ENCODE measurements at regions of chr5 and their contacts with region 1.

Region 1: GRCh38 chr5:159915904-159916840 is at the start of gene ADRA1B:
- DNase-seq: peak; percentile 45 to 87
- H3K4me3 ChIP-seq: peak within 1 kb of the TSS; percentile 64
- H3K27ac ChIP-seq: peak within 1 kb of the TSS; percentile 100
- H3K4me1 ChIP-seq: peaks cover 94% of the 10 kb centered on the region
- H3K27me3 ChIP-seq: no peaks in the 10 kb centered on the region
- CTCF ChIP-seq: peak; percentile 51
- total RNA-seq, gene ADRA1B: 4.6 and 6.0 TPM in 2 replicates

Region 2: DNA sequence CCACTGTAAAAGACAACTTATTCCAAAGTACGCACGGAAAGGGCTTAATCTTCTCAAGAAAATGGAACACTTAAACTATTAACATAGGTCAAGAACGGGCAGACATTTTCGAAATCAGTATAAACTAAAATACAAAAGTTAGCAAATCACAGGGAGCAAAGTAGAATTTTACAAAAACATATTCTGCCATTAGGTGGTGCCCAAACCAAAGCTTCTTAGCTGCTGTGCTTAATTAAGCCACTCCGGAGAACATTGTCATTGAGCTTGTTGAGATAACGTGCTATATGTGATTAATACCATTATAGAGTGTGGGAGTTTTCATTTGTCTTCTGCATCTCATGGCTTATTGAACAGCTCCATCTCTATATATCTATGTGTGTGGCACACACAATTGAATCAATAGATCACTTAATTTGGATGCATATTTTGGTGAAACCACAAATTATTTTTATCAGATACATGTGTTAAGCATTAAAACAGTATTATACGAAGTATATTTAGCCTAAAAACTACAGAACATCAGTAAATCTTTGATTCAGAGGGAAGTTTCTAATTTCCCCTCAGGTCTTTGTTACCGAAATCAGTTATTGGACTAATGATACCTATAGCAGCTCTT is 629.6 kb before region 1 on chr5:
- CTCF ChIA-PET with region 1: interaction called, 3 read pairs
- POLR2A ChIA-PET with region 1: no interaction called
- intact Hi-C with region 1: loop called (anchors 1 kb)
- DNase-seq: no peak
- H3K4me3 ChIP-seq: no peak overlapping the region
- H3K27ac ChIP-seq: no peak overlapping the region
- H3K4me1 ChIP-seq: 0 out of 2 replicates have a peak, but pooled peaks cover 5% of the 10 kb centered on the region
- H3K27me3 ChIP-seq: no peaks in the 10 kb centered on the region
- CTCF ChIP-seq: peak; percentile 68

Region 3: DNA sequence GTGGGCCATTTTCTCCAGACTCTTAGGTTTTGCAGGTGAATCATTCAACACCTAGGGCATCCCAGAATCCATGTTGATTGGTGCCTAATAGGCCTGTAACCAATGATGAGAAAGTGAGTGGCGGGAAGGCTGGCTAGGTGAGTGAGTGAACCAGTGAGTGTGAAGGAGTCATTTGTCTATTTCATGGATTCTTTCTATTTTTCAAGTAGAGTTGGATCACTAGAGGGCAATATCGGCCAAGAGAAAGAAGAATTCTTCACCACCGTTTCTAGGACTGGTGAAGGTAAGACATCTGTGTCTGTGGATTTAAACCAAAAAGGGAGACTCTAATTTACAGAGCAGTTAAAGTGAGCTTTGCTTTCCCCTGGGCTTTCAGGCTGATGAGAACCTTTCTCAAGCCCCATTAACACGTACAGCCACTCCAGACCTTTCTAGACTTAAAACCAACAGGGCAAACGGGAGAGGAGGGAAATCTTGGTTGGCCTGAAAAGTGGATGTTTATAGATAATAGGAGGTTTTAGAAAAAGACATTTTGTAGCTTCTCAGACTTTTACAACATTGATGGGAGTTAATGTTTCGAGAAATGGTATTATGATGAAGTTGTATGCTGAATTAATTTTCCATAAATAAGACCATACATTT is 471.6 kb before region 1 on chr5:
- CTCF ChIA-PET with region 1: interaction called, 7 read pairs
- POLR2A ChIA-PET with region 1: no interaction called
- intact Hi-C with region 1: loop called (anchors 1 kb)
- DNase-seq: peak; percentile 38 to 65
- H3K4me3 ChIP-seq: no peak overlapping the region
- H3K27ac ChIP-seq: no peak overlapping the region
- H3K4me1 ChIP-seq: peaks cover 9% of the 10 kb centered on the region
- H3K27me3 ChIP-seq: no peaks in the 10 kb centered on the region
- CTCF ChIP-seq: peak; percentile 74

Region 4: GRCh38 chr5:159515909-159516415 is 400.2 kb before region 1 on chr5:
- CTCF ChIA-PET with region 1: interaction called, 26 read pairs
- POLR2A ChIA-PET with region 1: no interaction called
- intact Hi-C with region 1: loop called (anchors 1 kb)
- DNase-seq: peak; percentile 58 to 76
- H3K4me3 ChIP-seq: no peak overlapping the region
- H3K27ac ChIP-seq: no peak overlapping the region
- H3K4me1 ChIP-seq: peaks cover 45% of the 10 kb centered on the region
- H3K27me3 ChIP-seq: no peaks in the 10 kb centered on the region
- CTCF ChIP-seq: peak; percentile 72

Region 5: DNA sequence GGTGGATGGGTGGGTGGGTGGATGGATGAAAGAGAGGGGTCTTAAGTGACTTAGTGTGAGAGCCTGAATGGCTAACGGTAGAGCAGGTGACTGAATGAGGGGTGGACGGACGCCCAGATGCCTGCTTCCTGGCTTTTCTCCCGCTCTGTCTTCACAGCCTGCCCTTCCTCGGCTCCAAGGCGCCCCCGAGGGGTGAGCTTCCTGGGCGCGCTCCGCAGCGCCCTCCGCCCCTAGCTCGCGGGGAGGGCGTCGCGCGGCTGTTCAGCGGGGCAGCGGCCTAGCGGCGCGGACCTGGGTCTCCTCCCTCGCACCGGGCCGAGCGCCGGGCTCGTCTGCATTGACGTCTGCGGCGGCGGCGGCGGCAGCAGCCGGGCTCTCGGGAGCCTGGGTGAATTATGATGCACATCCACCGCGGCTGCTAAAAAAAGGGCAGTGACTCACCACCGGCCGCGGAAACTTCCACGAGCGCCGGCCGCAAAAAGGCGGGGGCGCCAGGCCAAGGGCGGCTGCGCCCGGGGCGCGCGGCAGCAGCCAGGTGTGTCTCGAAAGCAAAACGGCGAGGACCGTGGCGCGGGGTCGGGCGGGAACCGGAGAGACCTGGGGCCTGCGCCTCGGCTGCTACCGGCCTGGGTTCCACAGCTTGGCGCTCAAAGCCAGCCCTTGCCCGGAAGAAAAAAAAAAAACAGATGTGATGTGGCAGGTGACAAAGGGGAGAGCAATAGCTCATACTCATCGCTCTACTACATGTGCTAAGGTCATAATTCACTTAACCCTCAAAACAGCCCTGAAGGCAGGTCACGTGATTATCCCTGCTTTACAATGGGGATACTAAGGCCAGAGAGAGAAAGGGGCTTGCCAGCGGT is 142.9 kb before region 1 on chr5:
- CTCF ChIA-PET with region 1: no interaction called
- POLR2A ChIA-PET with region 1: no interaction called
- intact Hi-C with region 1: loop called (anchors 1 kb)
- DNase-seq: peak; percentile 71 to 83
- H3K4me3 ChIP-seq: peak overlapping the region; percentile 61
- H3K27ac ChIP-seq: peak overlapping the region; percentile 66
- H3K4me1 ChIP-seq: peaks cover 33% of the 10 kb centered on the region
- H3K27me3 ChIP-seq: no peaks in the 10 kb centered on the region
- CTCF ChIP-seq: peak; percentile 38; the same call in 1 of the 2 replicates

Region 6: GRCh38 chr5:159814810-159815585 is 101.2 kb before region 1 on chr5:
- CTCF ChIA-PET with region 1: no interaction called
- POLR2A ChIA-PET with region 1: no interaction called
- intact Hi-C with region 1: no loop called
- DNase-seq: no peak
- H3K4me3 ChIP-seq: no peak overlapping the region
- H3K27ac ChIP-seq: no peak overlapping the region
- H3K4me1 ChIP-seq: peaks cover 50% of the 10 kb centered on the region
- H3K27me3 ChIP-seq: no peaks in the 10 kb centered on the region
- CTCF ChIP-seq: no peak

Region 7: GRCh38 chr5:159861086-159861485 is 55.1 kb before region 1 on chr5:
- CTCF ChIA-PET with region 1: no interaction called
- POLR2A ChIA-PET with region 1: no interaction called
- intact Hi-C with region 1: no loop called
- DNase-seq: no peak
- H3K4me3 ChIP-seq: no peak overlapping the region
- H3K27ac ChIP-seq: no peak overlapping the region
- H3K4me1 ChIP-seq: 0 out of 2 replicates have a peak, but pooled peaks cover 8% of the 10 kb centered on the region
- H3K27me3 ChIP-seq: no peaks in the 10 kb centered on the region
- CTCF ChIP-seq: no peak

Region 8: DNA sequence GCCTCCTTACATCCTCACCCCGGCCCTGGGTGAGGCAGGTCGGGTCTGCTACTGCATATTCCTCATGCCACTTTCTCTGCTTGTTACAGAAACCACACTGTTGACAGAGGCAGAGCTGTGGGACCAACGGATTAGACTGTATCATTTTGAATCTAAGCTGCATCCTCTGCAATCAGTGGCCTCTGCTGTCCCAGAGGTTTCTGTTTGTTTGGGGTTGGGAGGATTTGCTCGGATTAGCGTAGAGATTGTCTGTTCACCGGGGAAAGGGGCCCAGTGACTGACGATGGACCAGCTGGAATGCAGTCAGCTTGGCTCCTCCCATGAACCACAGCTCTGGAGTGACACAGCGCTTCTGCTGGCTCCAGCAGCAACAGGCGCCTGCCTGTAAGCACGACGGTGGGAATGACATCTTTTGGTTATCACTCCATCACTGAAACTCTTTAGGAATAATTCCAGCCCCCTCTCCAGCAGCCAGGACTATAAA is 37.1 kb before region 1 on chr5:
- CTCF ChIA-PET with region 1: no interaction called
- POLR2A ChIA-PET with region 1: no interaction called
- intact Hi-C with region 1: loop called (anchors 2 kb)
- DNase-seq: peak; percentile 59 to 74
- H3K4me3 ChIP-seq: no peak overlapping the region
- H3K27ac ChIP-seq: peak overlapping the region; percentile 22; the same call in 1 of the 2 replicates
- H3K4me1 ChIP-seq: peaks cover 29% of the 10 kb centered on the region
- H3K27me3 ChIP-seq: no peaks in the 10 kb centered on the region
- CTCF ChIP-seq: no peak

Region 9: DNA sequence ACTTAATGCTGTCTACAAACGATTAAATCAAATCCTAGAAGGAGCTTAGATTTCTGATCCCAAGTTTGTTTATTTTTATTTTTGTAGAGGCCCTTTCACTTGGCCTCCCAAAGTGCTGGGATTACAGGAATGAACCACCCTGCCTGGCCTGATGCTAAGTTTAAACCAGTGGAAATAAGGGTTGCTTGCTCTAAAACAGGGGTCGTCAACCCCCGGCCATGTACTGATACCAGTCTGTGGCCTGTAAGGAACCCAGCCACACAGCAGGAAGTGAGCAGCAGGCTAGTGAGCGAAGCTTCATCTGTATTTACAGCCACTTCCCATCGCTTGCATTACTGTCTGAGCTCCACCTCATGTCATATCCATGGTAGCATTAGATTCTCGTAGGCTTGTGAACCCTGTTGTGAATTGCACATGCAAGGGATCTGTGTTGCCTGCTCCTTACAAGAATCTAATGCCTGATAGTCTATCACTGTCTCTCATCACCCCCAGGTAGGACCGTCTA is 104.1 kb after region 1 on chr5:
- CTCF ChIA-PET with region 1: no interaction called
- POLR2A ChIA-PET with region 1: no interaction called
- intact Hi-C with region 1: no loop called
- DNase-seq: no peak
- H3K4me3 ChIP-seq: no peak overlapping the region
- H3K27ac ChIP-seq: no peak overlapping the region
- H3K4me1 ChIP-seq: no peaks in the 10 kb centered on the region
- H3K27me3 ChIP-seq: no peaks in the 10 kb centered on the region
- CTCF ChIP-seq: no peak

Measured in PC-9 (cell line).